ENCODE measurements at regions of chr1 and their contacts with region 1.

Region 1: DNA sequence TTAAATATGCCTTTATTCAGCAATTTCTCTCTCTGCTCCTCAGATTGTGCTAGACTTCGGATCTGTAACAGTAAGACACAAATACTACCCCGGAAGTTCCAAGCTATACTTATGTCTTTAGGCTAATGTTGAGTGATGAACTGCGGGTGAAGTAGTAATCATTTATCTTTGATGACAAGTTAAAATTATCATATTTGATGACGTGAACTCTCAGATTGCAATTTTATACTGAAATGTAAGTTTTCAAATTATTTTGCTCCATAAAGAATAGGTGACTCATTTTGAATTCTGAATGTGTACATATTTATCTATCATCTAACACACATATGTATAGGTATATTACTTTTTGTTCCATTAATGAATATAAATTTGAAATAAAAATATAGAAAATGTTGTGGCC is 10.6 kb downstream of the CHRM3 start:
- DNase-seq: no peak
- ATAC-seq: no peak
- H3K4me3 ChIP-seq: no peak overlapping the region
- H3K27ac ChIP-seq: no peak overlapping the region
- H3K4me1 ChIP-seq: no peaks in the 10 kb centered on the region
- H3K27me3 ChIP-seq: no peaks in the 10 kb centered on the region

Region 2: GRCh38 chr1:239293350-239294110 is 103.5 kb before region 1 on chr1:
- intact Hi-C with region 1: no loop called
- DNase-seq: no peak
- ATAC-seq: no peak
- H3K4me3 ChIP-seq: no peak overlapping the region
- H3K27ac ChIP-seq: no peak overlapping the region
- H3K4me1 ChIP-seq: no peaks in the 10 kb centered on the region
- H3K27me3 ChIP-seq: no peaks in the 10 kb centered on the region

Region 3: GRCh38 chr1:239558991-239559390 is 162.0 kb after region 1 on chr1:
- intact Hi-C with region 1: no loop called
- DNase-seq: no peak
- ATAC-seq: no peak
- H3K4me3 ChIP-seq: no peak overlapping the region
- H3K27ac ChIP-seq: no peak overlapping the region
- H3K4me1 ChIP-seq: no peaks in the 10 kb centered on the region
- H3K27me3 ChIP-seq: no peaks in the 10 kb centered on the region

Region 4: DNA sequence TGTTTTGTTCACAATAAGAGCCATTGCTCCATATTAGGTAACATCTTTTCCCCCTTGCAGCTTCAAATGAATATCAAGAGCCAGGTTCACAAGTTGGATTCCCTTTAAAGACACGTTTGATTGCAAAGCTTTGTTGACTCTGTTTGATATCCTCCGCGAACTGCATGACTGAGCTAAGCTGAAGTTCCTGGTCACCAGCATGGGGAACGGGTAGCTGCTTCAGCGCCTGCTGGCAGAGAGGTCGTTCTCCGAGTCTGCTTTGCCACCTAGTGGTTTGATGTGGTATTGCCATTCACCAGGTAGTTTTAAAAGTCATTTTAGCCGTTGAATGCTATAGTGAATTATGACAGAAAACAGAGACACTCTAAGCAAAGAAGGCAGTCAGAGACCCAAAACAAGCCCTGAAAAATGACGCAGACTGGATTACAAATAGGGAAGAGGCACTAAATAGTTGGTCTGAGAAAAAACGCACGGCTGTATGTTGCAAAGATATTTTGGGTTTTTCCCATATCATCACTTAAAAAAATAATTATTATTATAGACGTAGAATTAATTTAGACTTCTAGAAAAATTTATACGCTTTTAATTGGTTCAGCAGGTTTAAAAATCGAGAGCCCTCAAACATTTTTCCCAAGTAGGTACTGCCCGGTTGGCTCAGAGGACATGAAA is 501.2 kb after region 1 on chr1:
- intact Hi-C with region 1: loop called in 2 of 4 experiments (anchors 5 to 10 kb)
- DNase-seq: peak; percentile 70 to 84 (median 75)
- ATAC-seq: peak; percentile 89 to 90
- H3K4me3 ChIP-seq: no peak overlapping the region
- H3K27ac ChIP-seq: no peak overlapping the region
- H3K4me1 ChIP-seq: no peaks in the 10 kb centered on the region
- H3K27me3 ChIP-seq: peaks cover 3% of the 10 kb centered on the region

Measured in right cardiac atrium (tissue), 5 donors.